Head of caudate nucleus (tissue), 42 donors: ENCODE measurements at regions of chr13 and their contacts with region 1.

Region 1: DNA sequence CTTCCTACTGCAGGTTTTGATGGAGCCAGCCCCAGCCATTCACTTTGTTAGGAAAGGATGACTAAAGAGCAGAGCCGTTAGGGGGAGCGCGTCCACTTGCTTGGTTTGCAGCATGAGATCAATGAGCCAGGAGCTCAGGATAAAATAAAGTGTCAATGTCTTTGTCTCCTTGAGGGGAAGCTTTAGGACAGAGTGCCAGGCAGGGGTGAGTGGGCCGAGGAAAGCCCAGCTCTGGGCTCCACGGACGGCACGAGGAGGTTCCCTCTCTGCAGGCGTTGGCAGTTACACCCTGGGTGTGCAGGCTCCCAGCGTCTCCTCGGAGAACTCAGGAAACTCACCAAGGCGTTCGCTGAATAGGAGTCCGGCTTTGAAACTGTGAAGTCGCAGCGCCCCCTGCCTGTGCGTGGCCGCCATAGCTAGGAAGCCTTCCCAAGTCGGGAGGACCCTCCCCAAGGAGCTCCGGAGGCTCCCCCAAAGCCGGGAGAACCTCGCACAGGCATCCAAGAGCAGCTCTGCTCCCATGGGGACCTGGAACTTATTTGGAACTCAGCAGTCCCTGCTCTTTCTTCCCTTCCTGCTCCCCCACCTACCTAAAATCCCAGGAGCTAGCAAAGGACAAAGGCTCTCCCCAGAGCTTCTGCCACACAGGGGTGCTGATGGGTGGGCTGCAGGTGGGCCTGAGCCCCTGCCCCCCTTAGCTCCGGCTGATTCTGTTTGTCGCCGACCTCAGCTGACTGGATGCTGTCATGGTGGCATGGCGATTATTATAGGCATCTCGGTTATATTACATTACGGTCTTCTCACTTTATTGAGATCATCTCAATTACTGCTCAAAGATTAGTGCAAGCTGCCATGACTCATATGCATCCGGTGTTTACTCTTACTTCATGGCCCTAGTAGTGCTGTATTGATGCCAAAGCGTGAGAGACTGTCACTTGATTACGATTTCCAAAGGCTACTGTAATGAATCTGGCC is 34.4 kb downstream of the GSX1 start:
- DNase-seq: peak; percentile 70 to 93 (median 84)

Region 2: GRCh38 chr13:27374650-27375049 is 452.0 kb before region 1 on chr13:
- intact Hi-C with region 1: loop called (anchors 2 kb)
- DNase-seq: peak in 36 of 42 donors; percentile 22 to 81 (median 54)

Region 3: DNA sequence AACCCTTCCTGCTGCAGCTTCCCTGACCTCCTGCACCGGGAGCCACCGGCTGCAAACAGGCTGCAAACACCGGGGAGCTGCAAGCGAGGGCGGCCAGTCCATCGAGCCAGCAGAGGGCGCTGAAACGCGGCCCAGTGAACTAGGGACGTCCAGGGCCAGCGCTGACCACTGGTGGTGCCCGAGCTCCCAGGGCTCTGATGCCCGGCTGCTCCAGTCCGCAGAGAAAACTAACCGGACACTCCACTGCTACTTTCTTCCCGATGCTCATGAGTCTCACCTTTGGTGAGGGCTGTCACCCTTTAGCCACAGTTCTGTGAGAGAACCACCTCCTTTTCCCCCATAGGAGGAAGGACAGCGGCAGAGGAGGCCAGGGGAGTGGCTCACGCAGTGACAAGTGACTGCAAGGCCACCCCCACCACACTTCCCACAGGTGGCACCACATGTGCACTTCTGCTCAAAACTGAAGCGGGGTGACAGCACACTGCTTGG is 293.5 kb before region 1 on chr13:
- intact Hi-C with region 1: loop called (anchors 5 kb)
- DNase-seq: peak; percentile 47 to 93 (median 86)

Region 4: DNA sequence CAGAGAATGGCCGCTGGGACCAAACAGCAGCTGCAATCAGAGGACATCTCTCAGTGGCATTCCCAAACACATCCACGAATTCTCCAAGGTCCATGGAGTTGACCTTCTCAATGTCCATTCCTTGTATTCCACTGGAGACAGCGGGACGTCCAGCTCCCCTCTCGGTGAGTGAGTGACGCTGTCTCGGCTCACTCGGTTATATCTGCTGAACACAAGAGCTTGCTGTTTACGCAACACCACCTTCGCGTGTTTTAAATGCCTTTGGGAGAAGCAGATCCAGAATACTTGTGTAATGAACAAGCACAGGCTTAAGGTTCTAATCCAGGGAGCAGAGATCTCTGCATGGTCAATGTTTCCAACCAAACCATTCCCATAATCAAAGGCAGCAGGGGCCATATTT is 161.9 kb after region 1 on chr13 and contains the start of gene URAD:
- intact Hi-C with region 1: loop called (anchors 5 kb)
- DNase-seq: no peak